Natural killer cell (primary cell): ENCODE measurements at regions of chr6 and their contacts with region 1.

Region 1: GRCh38 chr6:35297601-35298481 is at the start of gene DEF6:
- DNase-seq: peak; percentile 85 to 95
- ATAC-seq: peak; percentile 85 to 92 (median 91)
- H3K4me3 ChIP-seq: peak within 1 kb of the TSS; percentile 95
- H3K4me3 Mint-ChIP-seq: peak within 1 kb of the TSS; percentile 89
- H3K27ac ChIP-seq: peak within 1 kb of the TSS; percentile 97
- H3K27ac Mint-ChIP-seq: peak within 1 kb of the TSS; percentile 97 to 98
- H3K4me1 ChIP-seq: peaks cover 54% of the 10 kb centered on the region
- H3K4me1 Mint-ChIP-seq: peaks cover 35 to 51% of the 10 kb centered on the region in 2 donors
- H3K27me3 ChIP-seq: no peaks in the 10 kb centered on the region
- H3K27me3 Mint-ChIP-seq: no peaks in the 10 kb centered on the region
- CTCF ChIP-seq: peak; percentile 87
- total RNA-seq, gene DEF6: 232 to 297 (median 241) TPM

Region 2: GRCh38 chr6:35259948-35260590 is 37.8 kb before region 1 on chr6:
- intact Hi-C with region 1: loop called (anchors 2 kb)
- DNase-seq: peak; percentile 79 to 90
- ATAC-seq: peak; percentile 62 to 69 (median 67)
- H3K4me3 ChIP-seq: peak overlapping the region; percentile 80
- H3K4me3 Mint-ChIP-seq: peak overlapping the region; percentile 86
- H3K27ac ChIP-seq: peak overlapping the region; percentile 94
- H3K27ac Mint-ChIP-seq: peak overlapping the region; percentile 92 to 97
- H3K4me1 ChIP-seq: peaks cover 19% of the 10 kb centered on the region
- H3K4me1 Mint-ChIP-seq: peaks cover 52 to 64% of the 10 kb centered on the region in 2 donors
- H3K27me3 ChIP-seq: no peaks in the 10 kb centered on the region
- H3K27me3 Mint-ChIP-seq: no peaks in the 10 kb centered on the region
- CTCF ChIP-seq: no peak

Region 3: DNA sequence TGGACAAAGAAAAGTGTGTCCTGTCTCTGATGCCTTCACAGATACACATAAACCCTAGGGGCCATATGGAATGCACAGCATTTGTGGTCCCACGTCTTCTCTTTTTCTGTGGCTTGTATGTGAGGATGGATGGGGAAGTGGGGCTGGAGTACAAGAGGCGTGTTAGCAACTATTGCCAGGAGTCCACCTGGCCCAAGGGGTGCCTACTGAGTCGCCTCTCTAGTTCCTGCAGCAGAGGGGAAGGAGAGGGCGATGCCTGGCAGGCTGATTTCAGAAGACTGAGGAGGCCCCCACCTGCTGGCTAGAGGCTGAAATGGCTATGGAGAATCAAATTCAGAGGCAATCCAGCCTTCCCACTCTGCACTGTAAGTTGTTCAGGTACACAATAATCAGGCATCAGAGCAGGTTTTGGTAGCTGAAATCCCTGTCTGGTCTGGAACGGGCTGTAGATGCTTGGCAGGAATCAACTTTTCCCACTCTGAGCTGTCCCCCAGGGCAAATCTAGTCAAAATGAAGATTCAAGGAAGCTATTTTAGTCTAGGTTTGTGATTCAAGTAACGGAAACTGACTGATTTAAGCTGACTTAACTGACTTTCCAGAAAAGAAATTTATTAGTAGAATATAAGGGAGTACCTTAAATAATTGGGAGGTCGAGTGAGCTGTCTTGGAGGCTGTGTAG is 29.6 kb after region 1 on chr6:
- intact Hi-C with region 1: loop called (anchors 1 kb)
- DNase-seq: peak; percentile 63 to 87
- ATAC-seq: peak; percentile 90 to 99 (median 97)
- H3K4me3 ChIP-seq: no peak overlapping the region
- H3K4me3 Mint-ChIP-seq: no peak overlapping the region
- H3K27ac ChIP-seq: peak overlapping the region; percentile 4
- H3K27ac Mint-ChIP-seq: peak overlapping the region; percentile 79 to 82
- H3K4me1 ChIP-seq: peaks cover 16% of the 10 kb centered on the region
- H3K4me1 Mint-ChIP-seq: peaks cover 13 to 16% of the 10 kb centered on the region in 2 donors
- H3K27me3 ChIP-seq: no peaks in the 10 kb centered on the region
- H3K27me3 Mint-ChIP-seq: no peaks in the 10 kb centered on the region
- CTCF ChIP-seq: peak; percentile 71

Region 4: GRCh38 chr6:35441205-35441604 is 143.4 kb after region 1 on chr6:
- intact Hi-C with region 1: no loop called
- DNase-seq: no peak
- ATAC-seq: no peak
- H3K4me3 ChIP-seq: no peak overlapping the region
- H3K4me3 Mint-ChIP-seq: no peak overlapping the region
- H3K27ac ChIP-seq: no peak overlapping the region
- H3K27ac Mint-ChIP-seq: no peak overlapping the region
- H3K4me1 ChIP-seq: peaks cover 7% of the 10 kb centered on the region
- H3K4me1 Mint-ChIP-seq: peaks cover 0 to 6% of the 10 kb centered on the region in 2 donors
- H3K27me3 ChIP-seq: no peaks in the 10 kb centered on the region
- H3K27me3 Mint-ChIP-seq: no peaks in the 10 kb centered on the region
- CTCF ChIP-seq: no peak

Region 5: DNA sequence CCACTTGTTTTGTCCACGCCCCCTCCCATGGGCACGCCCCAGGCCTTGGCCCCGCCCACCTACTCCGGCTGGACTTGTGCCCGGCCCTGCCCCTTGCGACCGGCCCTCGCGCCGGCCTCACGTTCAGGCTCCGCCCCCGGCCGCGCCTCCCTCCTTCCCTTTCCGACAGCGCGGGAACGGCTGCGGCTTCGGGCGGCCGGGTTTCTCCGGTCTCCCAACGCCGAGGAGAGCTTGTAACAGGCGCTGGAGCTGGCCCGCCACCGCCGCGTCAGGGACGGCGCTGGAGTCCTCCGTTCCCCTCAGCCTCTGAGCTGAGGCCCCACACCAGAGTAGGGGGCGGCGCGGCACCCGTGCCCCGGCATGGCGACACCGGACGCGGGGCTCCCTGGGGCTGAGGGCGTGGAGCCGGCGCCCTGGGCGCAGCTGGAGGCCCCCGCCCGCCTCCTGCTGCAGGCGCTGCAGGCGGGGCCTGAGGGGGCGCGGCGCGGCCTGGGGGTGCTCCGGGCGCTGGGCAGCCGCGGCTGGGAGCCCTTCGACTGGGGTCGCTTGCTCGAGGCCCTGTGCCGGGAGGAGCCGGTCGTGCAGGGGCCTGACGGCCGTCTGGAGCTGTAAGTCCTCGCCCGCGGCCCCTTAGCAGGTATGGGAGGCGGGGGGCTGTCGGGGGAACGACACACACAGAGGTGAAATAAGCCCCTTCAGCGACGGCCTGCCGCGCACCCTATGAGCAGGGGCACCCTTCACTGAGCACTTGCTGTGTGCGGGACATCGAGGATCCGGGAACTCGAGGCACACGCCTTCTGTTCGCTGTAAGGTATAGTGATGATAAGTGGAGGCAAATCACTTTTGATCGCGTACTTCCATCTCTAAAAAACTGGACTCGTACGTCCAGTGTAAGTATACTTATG is 154.6 kb after region 1 on chr6 and contains the start of gene FANCE:
- intact Hi-C with region 1: loop called (anchors 1 kb)
- DNase-seq: peak; percentile 89 to 90
- ATAC-seq: peak; percentile 86 to 94 (median 91)
- H3K4me3 ChIP-seq: peak within 1 kb of the TSS; percentile 67
- H3K4me3 Mint-ChIP-seq: peak within 1 kb of the TSS; percentile 91
- H3K27ac ChIP-seq: peak within 1 kb of the TSS; percentile 25
- H3K27ac Mint-ChIP-seq: peak within 1 kb of the TSS; percentile 48 to 83
- H3K4me1 ChIP-seq: peaks cover 12% of the 10 kb centered on the region
- H3K4me1 Mint-ChIP-seq: peaks cover 23 to 34% of the 10 kb centered on the region in 2 donors
- H3K27me3 ChIP-seq: no peaks in the 10 kb centered on the region
- H3K27me3 Mint-ChIP-seq: peaks cover 0 to under 1% of the 10 kb centered on the region in 2 donors
- CTCF ChIP-seq: no peak
- total RNA-seq, gene FANCE: 2.2 to 3.2 (median 2.6) TPM

Region 6: DNA sequence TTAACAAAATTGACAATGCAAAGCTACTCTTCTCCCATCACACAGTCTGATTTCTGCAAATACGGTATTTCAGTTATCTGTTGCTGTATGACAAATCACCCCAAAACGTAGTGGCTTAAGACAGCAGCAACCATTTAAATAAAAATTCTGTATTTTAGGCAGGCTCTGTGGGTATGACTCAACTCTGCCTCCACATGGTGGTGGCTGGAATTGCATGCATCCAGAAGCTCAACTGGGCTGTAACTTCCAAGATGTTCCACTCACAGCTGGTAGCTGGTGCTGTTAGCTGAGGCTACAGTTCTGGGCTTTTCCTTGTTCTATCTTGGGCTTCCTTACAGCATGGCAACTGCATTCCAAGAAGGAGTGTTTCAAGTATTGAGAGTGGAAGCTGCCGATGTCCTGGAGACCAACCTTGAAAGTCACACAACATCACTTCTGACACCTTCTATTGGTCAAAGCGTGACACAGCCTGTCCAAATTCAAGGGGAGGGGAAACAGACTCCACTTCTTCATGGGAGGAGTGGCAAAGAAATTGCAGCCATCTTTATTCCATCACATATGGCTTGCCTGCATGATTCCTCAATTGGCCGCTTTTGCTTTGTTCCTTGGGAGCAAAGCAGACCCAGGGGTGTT is 254.6 kb after region 1 on chr6:
- intact Hi-C with region 1: loop called (anchors 2 kb)
- DNase-seq: peak; percentile 63 to 84
- ATAC-seq: peak; percentile 74 to 91 (median 81)
- H3K4me3 ChIP-seq: no peak overlapping the region
- H3K4me3 Mint-ChIP-seq: no peak overlapping the region
- H3K27ac ChIP-seq: no peak overlapping the region
- H3K27ac Mint-ChIP-seq: no peak overlapping the region
- H3K4me1 ChIP-seq: no peaks in the 10 kb centered on the region
- H3K4me1 Mint-ChIP-seq: peaks cover 0 to 6% of the 10 kb centered on the region in 2 donors
- H3K27me3 ChIP-seq: no peaks in the 10 kb centered on the region
- H3K27me3 Mint-ChIP-seq: peaks cover 0 to 3% of the 10 kb centered on the region in 2 donors
- CTCF ChIP-seq: peak; percentile 95